PC-9 (cell line): ENCODE measurements at regions of chr15 and their contacts with region 1.

Region 1: DNA sequence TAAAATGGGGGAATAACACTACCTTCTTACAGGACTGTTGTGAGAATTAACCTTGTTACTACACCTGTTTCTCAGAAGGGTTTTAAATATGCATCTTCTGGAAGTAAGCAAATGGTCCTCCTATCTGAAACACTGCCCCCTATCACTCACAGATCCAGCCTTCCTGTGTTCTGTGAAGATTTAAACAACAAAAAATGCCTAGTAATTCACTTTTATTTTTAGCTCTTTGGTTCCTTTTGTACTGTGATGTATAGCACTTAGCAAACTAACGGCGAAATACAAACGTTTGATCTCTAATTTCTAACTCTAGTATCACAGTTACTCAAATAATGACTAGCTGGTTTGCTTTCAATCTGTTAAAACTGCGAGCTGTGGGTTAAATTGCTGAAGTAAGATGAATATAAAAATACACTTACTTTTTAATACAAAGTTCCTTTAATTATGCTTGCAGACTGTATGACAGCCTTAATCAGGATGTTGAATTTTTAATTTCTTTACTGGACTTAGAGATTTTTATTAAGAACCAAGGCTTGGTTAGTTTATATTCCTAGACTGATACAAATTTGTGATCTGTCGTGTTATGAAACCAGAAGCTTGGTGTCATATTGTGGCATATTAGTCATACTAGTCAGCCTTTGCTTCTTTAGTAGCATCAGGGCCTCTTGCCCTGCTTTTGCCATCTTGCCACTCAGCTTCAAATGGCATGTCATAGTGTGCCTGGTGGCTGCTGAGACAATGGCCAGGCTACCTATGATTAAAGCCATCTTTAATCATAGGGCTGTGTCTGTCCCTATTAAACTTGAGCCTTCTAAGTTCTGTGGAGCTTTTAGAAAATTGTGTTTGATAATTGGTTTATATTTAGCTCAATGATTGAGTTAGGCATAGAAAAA is 9.2 kb downstream of the EIF3J start:
- DNase-seq: no peak
- H3K4me3 ChIP-seq: no peak overlapping the region
- H3K27ac ChIP-seq: peak overlapping the region; percentile 16; the same call in 1 of the 2 replicates
- H3K4me1 ChIP-seq: peaks cover 23% of the 10 kb centered on the region; the same call in 1 of the 2 replicates
- H3K27me3 ChIP-seq: no peaks in the 10 kb centered on the region
- CTCF ChIP-seq: no peak; the same call in 1 of the 2 replicates

Region 2: DNA sequence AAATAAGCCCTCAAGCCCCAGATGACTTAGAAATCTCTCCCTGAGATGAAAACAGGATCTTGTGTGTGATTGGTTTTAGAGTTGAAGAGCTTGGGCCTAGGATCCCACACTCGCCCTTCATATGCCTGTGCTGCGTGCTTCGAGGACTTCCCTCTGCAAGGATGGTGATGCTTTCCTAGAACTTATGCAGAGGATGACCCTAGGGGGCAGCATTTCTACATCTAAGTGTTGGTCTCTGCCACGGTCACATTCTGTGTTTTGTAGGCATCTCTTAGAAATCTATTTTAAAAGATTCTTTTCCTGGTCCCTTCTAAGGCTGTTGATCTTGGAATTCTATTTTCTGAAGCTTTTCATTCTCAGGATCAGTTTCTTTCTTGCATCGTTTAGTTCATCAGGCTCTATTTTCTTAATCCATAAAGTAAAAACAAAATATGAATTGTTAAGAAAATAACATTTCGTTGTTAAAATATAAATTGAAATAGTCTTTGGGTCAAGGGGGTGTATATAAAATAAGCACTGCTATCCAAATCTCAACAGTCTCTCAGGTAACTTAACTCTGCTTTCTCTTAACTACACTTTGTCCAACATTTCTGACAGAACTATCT is 673.6 kb before region 1 on chr15:
- CTCF ChIA-PET with region 1: no interaction called
- POLR2A ChIA-PET with region 1: no interaction called
- intact Hi-C with region 1: loop called (anchors 1 kb)
- DNase-seq: peak; percentile 31 to 40
- H3K4me3 ChIP-seq: no peak overlapping the region
- H3K27ac ChIP-seq: no peak overlapping the region
- H3K4me1 ChIP-seq: no peaks in the 10 kb centered on the region
- H3K27me3 ChIP-seq: no peaks in the 10 kb centered on the region
- CTCF ChIP-seq: peak; percentile 65

Region 3: DNA sequence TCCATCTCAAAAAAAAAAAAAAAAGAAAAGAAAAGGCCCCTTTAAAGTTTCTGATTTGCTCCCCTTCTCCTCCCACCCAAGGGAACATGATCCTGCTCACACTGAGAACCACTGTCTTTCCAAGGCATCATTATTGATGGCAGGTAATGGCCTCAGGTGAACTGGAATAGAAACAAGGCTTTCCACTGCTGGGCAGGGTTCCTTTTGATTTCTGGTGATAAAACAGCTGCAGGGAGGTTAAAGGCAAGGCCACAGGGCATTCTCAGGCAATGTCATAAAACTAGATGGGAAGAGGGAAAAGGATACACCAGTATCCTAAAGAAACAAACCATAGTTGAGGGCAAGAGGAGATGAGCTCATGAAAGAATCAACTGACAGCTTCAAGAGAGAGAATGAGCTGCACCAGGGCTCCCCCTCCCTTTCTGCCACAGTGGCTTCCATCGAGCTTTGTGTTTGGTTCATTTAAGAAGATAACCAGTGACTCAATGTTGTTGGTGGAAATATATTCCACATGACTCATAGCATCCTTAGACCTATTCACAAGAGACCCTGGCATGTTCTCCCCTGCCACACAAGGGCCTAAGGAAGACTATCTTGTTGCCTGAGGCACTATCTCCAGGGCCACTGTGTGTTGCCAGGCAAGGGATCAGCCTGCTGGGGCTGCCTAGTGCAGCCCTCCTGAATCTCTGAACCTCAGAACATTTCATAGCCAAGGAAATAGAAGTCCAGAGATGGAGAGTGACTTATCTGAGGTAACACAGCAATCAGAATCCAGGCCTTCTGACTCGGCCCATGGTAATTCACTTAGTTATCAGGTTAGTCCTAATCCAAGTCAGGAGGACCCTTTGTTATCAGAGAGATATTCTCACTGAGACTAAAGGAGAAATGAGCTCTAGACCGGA is 632.9 kb before region 1 on chr15:
- CTCF ChIA-PET with region 1: no interaction called
- POLR2A ChIA-PET with region 1: interaction called, 11 read pairs
- intact Hi-C with region 1: no loop called
- DNase-seq: peak; percentile 71 to 86
- H3K4me3 ChIP-seq: no peak overlapping the region
- H3K27ac ChIP-seq: no peak overlapping the region
- H3K4me1 ChIP-seq: peaks cover 18% of the 10 kb centered on the region
- H3K27me3 ChIP-seq: no peaks in the 10 kb centered on the region
- CTCF ChIP-seq: no peak

Region 4: DNA sequence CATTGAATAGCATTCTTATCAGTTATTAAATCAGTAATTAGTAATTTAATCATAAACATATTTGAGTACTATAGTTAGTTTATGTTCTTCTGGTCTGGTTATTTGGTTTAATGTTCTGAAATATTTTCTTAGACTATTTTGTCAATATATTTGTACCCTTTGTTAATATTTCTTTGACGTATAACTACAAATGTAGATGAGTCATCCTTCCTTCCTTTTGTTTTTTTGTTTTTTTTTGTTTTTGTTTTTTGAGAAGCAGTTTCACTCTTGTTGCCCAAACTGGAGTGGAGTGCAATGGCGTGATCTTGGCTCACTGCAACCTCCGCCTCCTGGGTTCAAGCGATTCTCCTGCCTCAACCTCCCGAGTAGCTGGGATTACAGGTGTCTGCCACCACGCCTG is 26.6 kb before region 1 on chr15:
- CTCF ChIA-PET with region 1: no interaction called
- POLR2A ChIA-PET with region 1: no interaction called
- intact Hi-C with region 1: no loop called
- DNase-seq: no peak
- H3K4me3 ChIP-seq: no peak overlapping the region
- H3K27ac ChIP-seq: no peak overlapping the region
- H3K4me1 ChIP-seq: no peaks in the 10 kb centered on the region
- H3K27me3 ChIP-seq: no peaks in the 10 kb centered on the region
- CTCF ChIP-seq: no peak

Region 5: DNA sequence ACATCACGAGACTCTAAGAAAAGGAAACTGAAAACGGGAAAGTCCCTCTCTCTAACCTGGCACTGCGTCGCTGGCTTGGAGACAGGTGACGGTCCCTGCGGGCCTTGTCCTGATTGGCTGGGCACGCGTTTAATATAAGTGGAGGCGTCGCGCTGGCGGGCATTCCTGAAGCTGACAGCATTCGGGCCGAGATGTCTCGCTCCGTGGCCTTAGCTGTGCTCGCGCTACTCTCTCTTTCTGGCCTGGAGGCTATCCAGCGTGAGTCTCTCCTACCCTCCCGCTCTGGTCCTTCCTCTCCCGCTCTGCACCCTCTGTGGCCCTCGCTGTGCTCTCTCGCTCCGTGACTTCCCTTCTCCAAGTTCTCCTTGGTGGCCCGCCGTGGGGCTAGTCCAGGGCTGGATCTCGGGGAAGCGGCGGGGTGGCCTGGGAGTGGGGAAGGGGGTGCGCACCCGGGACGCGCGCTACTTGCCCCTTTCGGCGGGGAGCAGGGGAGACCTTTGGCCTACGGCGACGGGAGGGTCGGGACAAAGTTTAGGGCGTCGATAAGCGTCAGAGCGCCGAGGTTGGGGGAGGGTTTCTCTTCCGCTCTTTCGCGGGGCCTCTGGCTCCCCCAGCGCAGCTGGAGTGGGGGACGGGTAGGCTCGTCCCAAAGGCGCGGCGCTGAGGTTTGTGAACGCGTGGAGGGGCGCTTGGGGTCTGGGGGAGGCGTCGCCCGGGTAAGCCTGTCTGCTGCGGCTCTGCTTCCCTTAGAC is 165.4 kb after region 1 on chr15 and contains the start of gene B2M:
- CTCF ChIA-PET with region 1: no interaction called
- POLR2A ChIA-PET with region 1: interaction called, 18 read pairs
- intact Hi-C with region 1: no loop called
- DNase-seq: peak; percentile 88 to 95
- H3K4me3 ChIP-seq: peak within 1 kb of the TSS; percentile 94
- H3K27ac ChIP-seq: peak within 1 kb of the TSS; percentile 53
- H3K4me1 ChIP-seq: peaks cover 18% of the 10 kb centered on the region
- H3K27me3 ChIP-seq: no peaks in the 10 kb centered on the region
- CTCF ChIP-seq: no peak
- total RNA-seq, gene B2M: 606 and 685 TPM in 2 replicates